ENCODE measurements at regions of chr7 and their contacts with region 1.

Region 1: DNA sequence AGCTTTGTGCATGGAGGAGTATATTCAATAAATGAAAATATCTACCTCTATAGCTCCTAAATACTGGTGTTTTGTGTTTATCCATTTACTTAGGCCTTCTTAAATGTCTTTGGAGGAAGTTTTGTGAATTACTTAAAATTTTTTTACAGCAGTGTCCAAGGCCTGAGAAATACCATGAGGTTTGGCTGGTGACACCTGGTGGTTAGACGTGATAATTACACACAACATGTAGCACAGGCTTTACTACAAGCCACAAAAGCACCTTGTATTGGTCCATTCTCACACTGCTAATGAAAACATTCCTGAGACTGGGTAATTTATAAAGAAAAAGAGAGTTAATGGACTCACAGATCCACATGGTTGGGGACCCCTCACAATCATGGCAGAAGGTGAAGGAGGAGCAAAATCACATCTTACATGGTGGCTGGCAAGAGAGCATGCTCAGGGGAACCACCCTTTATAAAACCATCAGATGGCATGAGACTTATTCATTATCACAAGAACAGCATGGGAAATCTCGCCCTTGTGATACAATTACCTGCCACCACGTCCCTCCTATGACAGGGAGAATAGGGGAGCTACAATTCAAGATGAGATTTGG is 20.6 kb downstream of the HYAL4 start:
- DNase-seq: peak; percentile 23 to 26
- ATAC-seq: peak; percentile 90 to 92
- H3K4me3 ChIP-seq: no peak overlapping the region
- H3K27ac ChIP-seq: peak overlapping the region in 1 of 4 donors; percentile 31
- H3K4me1 ChIP-seq: peaks cover 10 to 22% of the 10 kb centered on the region in 2 donors
- H3K27me3 ChIP-seq: no peaks in the 10 kb centered on the region
- CTCF ChIP-seq: peak; percentile 69 to 82 (median 75)
- POLR2A ChIP-seq: no peak

Region 2: DNA sequence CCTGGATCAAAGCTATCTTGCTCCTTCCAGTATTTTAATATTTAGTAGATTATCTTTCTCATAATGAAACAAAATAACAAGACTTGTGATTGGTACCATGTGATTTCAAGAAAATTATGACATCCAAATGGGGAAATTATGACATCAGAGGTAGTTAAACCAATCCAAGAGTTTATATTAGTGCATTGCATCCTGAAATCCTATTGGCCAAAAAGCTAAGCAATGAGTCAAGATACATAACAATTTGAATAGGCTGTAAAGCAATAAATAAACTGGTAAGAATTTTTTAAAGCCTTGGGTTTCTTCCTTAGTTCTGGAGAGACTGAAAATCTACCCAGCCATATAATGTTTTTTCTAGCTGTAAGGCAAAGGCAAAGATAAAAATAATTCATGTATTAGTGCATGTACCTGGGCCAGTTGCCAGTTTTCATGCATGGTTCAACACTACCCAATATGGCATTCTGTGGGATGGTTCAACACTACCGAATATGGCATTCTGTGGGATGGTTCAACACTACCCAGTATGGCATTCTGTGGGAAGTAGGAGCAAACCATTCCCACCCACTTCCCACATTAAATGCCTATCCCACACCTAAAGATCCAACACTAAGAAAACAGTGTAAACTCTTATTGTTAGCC is 1162.6 kb before region 1 on chr7 and contains the start of gene RNF148:
- in situ Hi-C with region 1: no loop called
- intact Hi-C with region 1: no loop called
- DNase-seq: no peak
- ATAC-seq: no peak
- H3K4me3 ChIP-seq: no peak within 1 kb of the TSS
- H3K27ac ChIP-seq: no peak within 1 kb of the TSS
- H3K4me1 ChIP-seq: no peaks in the 10 kb centered on the region
- H3K27me3 ChIP-seq: no peaks in the 10 kb centered on the region
- CTCF ChIP-seq: no peak
- POLR2A ChIP-seq: no peak
- total RNA-seq, gene RNF148: 0.27 to 0.46 TPM in 2 of 4 donors, not detected in the others

Region 3: DNA sequence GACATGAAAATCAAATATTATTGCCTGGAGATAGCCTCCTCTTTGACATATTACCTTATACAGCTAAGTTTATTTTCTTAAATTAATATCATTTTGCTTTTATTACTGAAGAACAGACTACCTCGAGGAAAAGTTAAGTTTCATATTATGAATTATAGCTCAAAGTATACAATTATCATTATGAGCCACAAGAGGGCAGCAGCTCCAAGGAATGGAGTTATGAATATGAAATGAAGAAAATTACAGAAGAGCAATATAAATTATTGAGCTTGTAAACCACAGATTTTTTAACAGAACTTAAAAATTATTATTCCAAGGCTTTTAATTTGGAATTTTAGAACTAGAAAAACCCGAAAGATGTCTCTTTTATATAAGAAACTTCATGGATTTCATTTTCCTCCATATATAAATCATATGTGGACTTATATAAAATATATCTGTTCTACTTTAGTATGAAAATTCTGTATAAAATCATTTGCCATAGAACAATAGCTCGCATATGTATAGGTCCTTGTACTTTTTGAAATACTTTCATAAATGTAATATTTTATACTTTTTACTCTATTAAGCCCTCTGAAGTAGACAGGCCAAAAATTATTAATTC is 371.3 kb before region 1 on chr7:
- in situ Hi-C with region 1: no loop called
- intact Hi-C with region 1: loop called (anchors 10 kb)
- DNase-seq: no peak
- ATAC-seq: peak in 1 of 2 donors; percentile 56
- H3K4me3 ChIP-seq: no peak overlapping the region
- H3K27ac ChIP-seq: no peak overlapping the region
- H3K4me1 ChIP-seq: peaks cover 0 to 6% of the 10 kb centered on the region in 2 donors
- H3K27me3 ChIP-seq: no peaks in the 10 kb centered on the region
- CTCF ChIP-seq: peak; percentile 31 to 81 (median 67)
- POLR2A ChIP-seq: no peak

Region 4: DNA sequence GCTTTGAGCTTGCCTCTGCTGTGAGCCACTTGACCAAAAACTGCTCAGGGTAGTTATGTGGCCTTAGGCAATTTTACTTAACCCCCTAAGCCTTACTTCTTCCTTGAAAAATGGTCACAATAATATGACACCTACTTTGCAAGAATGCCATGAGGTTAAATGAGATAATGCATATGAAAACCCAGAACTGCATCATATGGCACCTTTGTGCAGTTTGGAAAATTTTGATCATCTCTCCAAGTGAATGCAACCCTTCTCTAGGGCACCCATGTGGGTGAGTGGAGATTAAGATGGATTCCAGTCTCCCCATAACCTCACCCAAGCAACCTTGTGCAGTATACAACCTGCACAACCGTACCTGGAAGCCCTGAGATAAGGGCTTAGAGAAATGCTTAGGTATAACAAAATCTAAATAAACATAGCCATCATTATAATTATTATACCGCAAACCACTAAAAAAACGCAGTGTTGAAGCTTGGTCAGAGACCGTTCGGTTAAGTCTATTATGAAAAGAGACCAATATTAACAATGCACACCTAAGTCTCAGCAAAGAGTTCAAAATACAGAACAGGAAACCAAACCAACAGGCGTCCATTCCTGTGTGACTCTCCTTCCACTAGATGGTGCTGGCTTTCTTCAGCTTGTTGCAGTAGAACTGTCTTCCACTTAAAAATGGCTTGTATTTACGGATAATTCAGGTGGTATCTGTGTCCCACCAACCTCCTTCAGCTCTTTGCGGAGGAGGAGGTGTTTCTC is 285.0 kb before region 1 on chr7:
- in situ Hi-C with region 1: loop called in 3 of 4 experiments (anchors 10 to 25 kb)
- intact Hi-C with region 1: loop called (anchors 5 kb)
- DNase-seq: no peak
- ATAC-seq: peak; percentile 85 to 91
- H3K4me3 ChIP-seq: peak overlapping the region in 1 of 4 donors; percentile 29
- H3K27ac ChIP-seq: peak overlapping the region; percentile 11 to 71 (median 44)
- H3K4me1 ChIP-seq: peaks cover 14 to 29% of the 10 kb centered on the region in 2 donors
- H3K27me3 ChIP-seq: no peaks in the 10 kb centered on the region
- CTCF ChIP-seq: peak; percentile 45 to 80 (median 54)
- POLR2A ChIP-seq: no peak

Region 5: GRCh38 chr7:123682690-123683089 is 182.9 kb before region 1 on chr7:
- in situ Hi-C with region 1: loop called (anchors 10 to 25 kb)
- intact Hi-C with region 1: loop called (anchors 2 kb)
- DNase-seq: no peak
- ATAC-seq: no peak
- H3K4me3 ChIP-seq: no peak overlapping the region
- H3K27ac ChIP-seq: peak overlapping the region in 3 of 4 donors; percentile 75 to 85 (median 82)
- H3K4me1 ChIP-seq: peaks cover 47% of the 10 kb centered on the region in 2 donors
- H3K27me3 ChIP-seq: no peaks in the 10 kb centered on the region
- CTCF ChIP-seq: peak; percentile 35 to 59 (median 45)
- POLR2A ChIP-seq: no peak

Region 6: DNA sequence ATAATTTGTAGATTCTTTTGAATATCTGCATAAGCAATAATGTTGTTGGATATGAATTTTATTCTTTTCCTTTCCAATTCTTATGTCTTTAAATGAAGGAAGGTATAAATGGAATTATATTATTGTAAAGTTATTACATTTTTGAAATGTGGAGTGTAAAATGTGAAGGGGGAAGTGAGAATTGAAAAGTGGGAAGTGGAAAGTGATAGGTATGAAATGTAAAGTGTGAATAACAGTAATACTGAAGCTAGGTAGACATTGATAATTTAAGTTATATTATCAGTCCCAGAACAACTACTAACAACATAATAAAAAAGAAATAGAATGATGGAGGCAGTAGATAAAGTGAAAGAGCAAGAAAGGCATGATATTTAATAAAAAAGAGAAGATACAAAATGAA is 60.3 kb before region 1 on chr7:
- in situ Hi-C with region 1: loop called in 1 of 4 experiments (anchors 10 kb)
- intact Hi-C with region 1: no loop called
- DNase-seq: no peak
- ATAC-seq: no peak
- H3K4me3 ChIP-seq: no peak overlapping the region
- H3K27ac ChIP-seq: no peak overlapping the region
- H3K4me1 ChIP-seq: no peaks in the 10 kb centered on the region
- H3K27me3 ChIP-seq: no peaks in the 10 kb centered on the region
- CTCF ChIP-seq: no peak
- POLR2A ChIP-seq: no peak